ENCODE measurements at regions of chr17 and their contacts with region 1.

Region 1: DNA sequence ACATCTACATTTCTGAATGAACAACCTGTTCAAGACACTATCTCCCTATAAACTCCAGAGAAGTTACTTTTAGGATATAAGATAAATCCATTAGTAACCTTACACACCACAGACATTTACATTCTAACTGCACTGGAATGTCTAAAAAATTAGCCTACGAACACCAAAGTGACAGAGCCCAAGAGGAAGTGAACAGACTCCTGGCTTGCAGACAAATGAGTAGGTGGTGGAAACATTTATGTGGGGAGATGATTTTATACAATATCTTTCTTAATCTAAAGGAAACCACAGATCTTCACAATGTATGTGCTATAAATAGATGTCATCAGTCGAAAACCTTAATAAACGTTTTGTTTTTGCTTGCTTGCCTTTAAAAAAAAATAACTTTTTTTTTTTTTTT is 18.8 kb downstream of the ZNF652 start:
- DNase-seq: peak; percentile 38
- ATAC-seq: peak; percentile 70
- H3K4me3 Mint-ChIP-seq: peak overlapping the region; percentile 55
- H3K27ac Mint-ChIP-seq: peak overlapping the region; percentile 71
- H3K4me1 Mint-ChIP-seq: peaks cover 64% of the 10 kb centered on the region
- H3K27me3 Mint-ChIP-seq: peaks cover 2% of the 10 kb centered on the region

Region 2: GRCh38 chr17:48841395-48841831 is 501.9 kb before region 1 on chr17:
- CTCF ChIA-PET with region 1: no interaction called
- POLR2A ChIA-PET with region 1: no interaction called
- intact Hi-C with region 1: loop called in 1 of 2 experiments (anchors 2 kb)
- DNase-seq: peak; percentile 64
- ATAC-seq: peak; percentile 92
- H3K4me3 Mint-ChIP-seq: peak overlapping the region; percentile 27
- H3K27ac Mint-ChIP-seq: peak overlapping the region; percentile 51
- H3K4me1 Mint-ChIP-seq: peaks cover 57% of the 10 kb centered on the region
- H3K27me3 Mint-ChIP-seq: peaks cover under 1% of the 10 kb centered on the region

Region 3: GRCh38 chr17:49315551-49316257 is 27.6 kb before region 1 on chr17:
- CTCF ChIA-PET with region 1: interaction called, 9 read pairs
- POLR2A ChIA-PET with region 1: interaction called, 6 read pairs
- intact Hi-C with region 1: loop called in 1 of 2 experiments (anchors 1 kb)
- DNase-seq: peak; percentile 89
- ATAC-seq: peak; percentile 100
- H3K4me3 Mint-ChIP-seq: no peak overlapping the region
- H3K27ac Mint-ChIP-seq: no peak overlapping the region
- H3K4me1 Mint-ChIP-seq: peaks cover 24% of the 10 kb centered on the region
- H3K27me3 Mint-ChIP-seq: no peaks in the 10 kb centered on the region

Region 4: GRCh38 chr17:49361902-49362722 is 18.8 kb after region 1 on chr17 and contains the start of gene ZNF652:
- CTCF ChIA-PET with region 1: interaction called, 24 read pairs
- POLR2A ChIA-PET with region 1: interaction called, 3 read pairs
- intact Hi-C with region 1: loop called (anchors 1 kb)
- DNase-seq: peak; percentile 93
- ATAC-seq: peak; percentile 57
- H3K4me3 Mint-ChIP-seq: peak within 1 kb of the TSS; percentile 92
- H3K27ac Mint-ChIP-seq: peak within 1 kb of the TSS; percentile 92
- H3K4me1 Mint-ChIP-seq: peaks cover 50% of the 10 kb centered on the region
- H3K27me3 Mint-ChIP-seq: peaks cover 1% of the 10 kb centered on the region
- total RNA-seq, gene ZNF652: 5.2 to 7.0 TPM

Region 5: GRCh38 chr17:49646391-49647255 is 303.4 kb after region 1 on chr17:
- CTCF ChIA-PET with region 1: no interaction called
- POLR2A ChIA-PET with region 1: no interaction called
- intact Hi-C with region 1: loop called in 1 of 2 experiments (anchors 2 kb)
- DNase-seq: peak; percentile 78
- ATAC-seq: peak; percentile 91
- H3K4me3 Mint-ChIP-seq: peak overlapping the region; percentile 32
- H3K27ac Mint-ChIP-seq: peak overlapping the region; percentile 84
- H3K4me1 Mint-ChIP-seq: peaks cover 63% of the 10 kb centered on the region
- H3K27me3 Mint-ChIP-seq: no peaks in the 10 kb centered on the region

Measured in activated CD4-positive, alpha-beta T cell treated with anti-CD3 and anti-CD28 coated beads for 36 hours (primary cell).